Activated CD4-positive, alpha-beta T cell treated with anti-CD3 and anti-CD28 coated beads, Interleukin-2, amount 10 ng/mL, durations not matched to agents 7 days and 5 days (primary cell): ENCODE measurements at regions of chr6 and their contacts with region 1.

Region 1: GRCh38 chr6:30711758-30712380 is 5.2 kb downstream of the MDC1 start:
- DNase-seq: no peak
- H3K4me3 Mint-ChIP-seq: peak overlapping the region; percentile 54
- H3K27ac Mint-ChIP-seq: peak overlapping the region; percentile 84
- H3K4me1 Mint-ChIP-seq: peaks cover 57% of the 10 kb centered on the region
- H3K27me3 Mint-ChIP-seq: no peaks in the 10 kb centered on the region

Region 2: GRCh38 chr6:30700340-30700739 is 11.5 kb before region 1 on chr6:
- CTCF ChIA-PET with region 1: interaction called, 27 read pairs
- POLR2A ChIA-PET with region 1: no interaction called
- DNase-seq: no peak
- H3K4me3 Mint-ChIP-seq: no peak overlapping the region
- H3K27ac Mint-ChIP-seq: no peak overlapping the region
- H3K4me1 Mint-ChIP-seq: no peaks in the 10 kb centered on the region
- H3K27me3 Mint-ChIP-seq: no peaks in the 10 kb centered on the region

Region 3: DNA sequence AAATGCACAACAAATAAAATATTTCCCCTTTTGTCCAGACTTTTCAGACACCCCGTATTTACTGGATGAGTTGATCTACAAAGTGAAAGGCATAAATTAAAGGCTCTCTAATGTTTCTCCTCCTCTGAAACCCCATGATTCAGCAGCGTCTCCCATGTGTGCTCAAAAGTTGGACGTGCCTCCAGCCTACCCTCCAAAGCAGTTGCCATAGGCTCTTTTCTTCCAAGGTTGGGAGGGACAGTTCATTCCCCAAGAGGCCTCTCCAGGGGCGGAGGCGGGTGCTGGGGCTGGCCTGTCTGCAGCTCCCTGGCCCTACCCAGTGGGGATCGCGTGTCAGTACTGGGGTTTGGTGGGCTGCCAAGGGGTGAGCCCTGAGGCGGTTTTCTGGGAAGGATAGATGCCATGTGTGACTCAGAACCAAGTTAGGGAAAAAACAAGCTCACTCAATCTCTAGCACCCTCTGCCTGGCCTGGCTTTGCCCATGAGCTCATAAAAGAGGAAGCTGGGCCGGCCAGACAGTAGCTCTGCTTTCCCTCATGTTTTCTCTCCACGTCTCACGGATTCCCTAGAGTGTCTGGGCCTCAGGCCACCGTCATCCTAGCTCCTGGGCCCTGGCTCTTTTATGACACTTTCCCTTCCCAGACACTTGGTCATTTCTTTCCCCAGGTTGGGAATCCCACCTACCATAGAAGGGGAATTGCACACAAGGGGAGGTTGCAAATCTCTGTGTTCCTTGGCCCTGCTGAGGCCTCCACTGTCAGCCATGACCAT is 40.5 kb after region 1 on chr6:
- CTCF ChIA-PET with region 1: no interaction called
- POLR2A ChIA-PET with region 1: no interaction called
- DNase-seq: no peak
- H3K4me3 Mint-ChIP-seq: no peak overlapping the region
- H3K27ac Mint-ChIP-seq: no peak overlapping the region
- H3K4me1 Mint-ChIP-seq: peaks cover 22% of the 10 kb centered on the region
- H3K27me3 Mint-ChIP-seq: no peaks in the 10 kb centered on the region

Region 4: GRCh38 chr6:30769088-30769852 is 57.4 kb after region 1 on chr6:
- CTCF ChIA-PET with region 1: no interaction called
- POLR2A ChIA-PET with region 1: no interaction called
- DNase-seq: peak; percentile 79
- H3K4me3 Mint-ChIP-seq: peak overlapping the region; percentile 50
- H3K27ac Mint-ChIP-seq: peak overlapping the region; percentile 76
- H3K4me1 Mint-ChIP-seq: peaks cover 80% of the 10 kb centered on the region
- H3K27me3 Mint-ChIP-seq: no peaks in the 10 kb centered on the region

Region 5: DNA sequence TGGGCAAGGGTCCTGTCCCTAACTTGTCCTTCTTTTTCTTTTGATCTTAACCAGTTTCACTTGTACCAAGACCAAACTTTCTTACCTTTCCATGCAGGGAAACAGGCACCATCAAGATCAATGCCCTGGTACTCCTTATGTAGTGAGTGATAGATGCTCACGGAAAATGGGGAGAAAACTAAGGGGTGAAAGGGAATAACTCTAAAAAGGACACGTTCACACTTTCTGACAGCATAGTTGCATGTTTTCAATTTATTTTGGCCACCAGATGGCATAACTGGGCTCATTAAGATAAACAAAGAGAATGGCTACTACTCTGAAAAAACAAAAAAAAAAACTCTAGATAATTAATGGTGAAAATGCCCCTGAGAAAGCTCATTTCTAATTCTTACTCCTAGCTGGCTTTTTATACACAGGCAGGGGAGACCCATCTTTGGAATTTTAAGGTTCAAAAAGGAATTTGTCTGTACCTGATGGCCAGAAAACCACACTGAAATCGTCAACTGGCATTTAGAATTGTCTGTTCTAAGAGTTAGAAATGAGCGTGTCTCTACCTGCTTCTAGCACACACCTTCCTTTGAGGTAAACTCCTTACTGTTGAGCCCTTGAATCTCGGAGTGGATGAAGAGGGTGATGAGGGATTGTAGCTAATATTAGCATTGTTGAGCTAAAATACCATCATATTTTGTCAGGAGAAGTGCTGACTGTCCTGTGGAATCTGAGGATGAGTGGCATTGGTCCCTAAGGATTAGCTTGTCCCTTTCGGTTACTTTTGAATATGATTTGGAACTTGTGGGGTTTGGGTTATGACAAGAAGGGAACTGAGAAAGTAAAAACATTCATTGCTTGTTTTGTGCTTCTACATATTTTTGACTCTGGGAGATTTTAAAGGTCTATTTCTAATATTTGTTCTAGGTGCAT is 110.3 kb after region 1 on chr6:
- CTCF ChIA-PET with region 1: no interaction called
- POLR2A ChIA-PET with region 1: no interaction called
- DNase-seq: peak; percentile 44
- H3K4me3 Mint-ChIP-seq: no peak overlapping the region
- H3K27ac Mint-ChIP-seq: peak overlapping the region; percentile 60
- H3K4me1 Mint-ChIP-seq: peaks cover 61% of the 10 kb centered on the region
- H3K27me3 Mint-ChIP-seq: no peaks in the 10 kb centered on the region